GM12878 (cell line): ENCODE measurements at regions of chr7 and their contacts with region 1.

Region 1: GRCh38 chr7:137731436-137731835 is 115.3 kb downstream of the DGKI start:
- DNase-seq: no peak
- ATAC-seq: no peak
- H3K4me3 ChIP-seq: no peak overlapping the region
- H3K27ac ChIP-seq: no peak overlapping the region
- H3K4me1 ChIP-seq: no peaks in the 10 kb centered on the region
- H3K27me3 ChIP-seq: no peaks in the 10 kb centered on the region
- CTCF ChIP-seq: no peak
- EP300 ChIP-seq: no peak
- POLR2A ChIP-seq: no peak
- RAD21 ChIP-seq: no peak

Region 2: DNA sequence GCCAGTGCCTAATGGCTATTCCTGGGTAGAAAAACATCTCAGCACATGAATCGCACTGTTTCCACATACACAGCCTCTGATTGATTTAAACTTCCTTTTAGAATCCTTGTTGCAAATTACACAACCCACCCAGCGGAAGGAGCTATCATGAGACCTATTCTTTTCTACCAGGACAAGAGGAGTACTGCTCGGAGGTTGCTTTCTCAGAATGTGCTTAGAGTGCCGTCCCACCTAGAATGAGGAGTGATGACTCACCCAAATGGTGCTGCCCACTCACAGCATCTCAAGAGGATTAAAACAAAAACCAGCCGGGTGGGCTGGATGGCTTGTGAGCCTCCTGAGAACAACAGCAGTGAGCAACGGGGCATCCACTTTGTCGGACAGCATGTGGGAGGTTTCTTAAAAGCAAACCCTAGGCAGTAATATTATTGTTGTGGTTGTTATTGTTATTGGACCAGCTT is 13.6 kb before region 1 on chr7:
- CTCF ChIA-PET with region 1: interaction called, 6 read pairs
- POLR2A ChIA-PET with region 1: interaction called, 8 read pairs
- RAD21 ChIA-PET with region 1: interaction called, 3 read pairs
- SMC1A ChIA-PET with region 1: interaction called, 69 read pairs
- in situ Hi-C with region 1: no loop called
- intact Hi-C with region 1: no loop called
- DNase-seq: peak; percentile 3
- ATAC-seq: peak; percentile 80
- H3K4me3 ChIP-seq: no peak overlapping the region
- H3K27ac ChIP-seq: no peak overlapping the region
- H3K4me1 ChIP-seq: no peaks in the 10 kb centered on the region
- H3K27me3 ChIP-seq: no peaks in the 10 kb centered on the region
- CTCF ChIP-seq: no peak
- EP300 ChIP-seq: no peak
- POLR2A ChIP-seq: no peak
- RAD21 ChIP-seq: no peak

Region 3: GRCh38 chr7:137742051-137742450 is 10.6 kb after region 1 on chr7:
- CTCF ChIA-PET with region 1: interaction called, 8 read pairs
- POLR2A ChIA-PET with region 1: interaction called, 9 read pairs
- RAD21 ChIA-PET with region 1: interaction called, 4 read pairs
- SMC1A ChIA-PET with region 1: interaction called, 30 read pairs
- in situ Hi-C with region 1: no loop called
- intact Hi-C with region 1: no loop called
- DNase-seq: no peak
- ATAC-seq: no peak
- H3K4me3 ChIP-seq: no peak overlapping the region
- H3K27ac ChIP-seq: no peak overlapping the region
- H3K4me1 ChIP-seq: no peaks in the 10 kb centered on the region
- H3K27me3 ChIP-seq: no peaks in the 10 kb centered on the region
- CTCF ChIP-seq: no peak
- EP300 ChIP-seq: no peak
- POLR2A ChIP-seq: no peak
- RAD21 ChIP-seq: no peak

Region 4: GRCh38 chr7:137747359-137748031 is 16.1 kb after region 1 on chr7:
- CTCF ChIA-PET with region 1: interaction called, 6 read pairs
- POLR2A ChIA-PET with region 1: no interaction called
- RAD21 ChIA-PET with region 1: no interaction called
- SMC1A ChIA-PET with region 1: interaction called, 30 read pairs
- in situ Hi-C with region 1: no loop called
- intact Hi-C with region 1: no loop called
- DNase-seq: no peak
- ATAC-seq: no peak
- H3K4me3 ChIP-seq: no peak overlapping the region
- H3K27ac ChIP-seq: no peak overlapping the region
- H3K4me1 ChIP-seq: no peaks in the 10 kb centered on the region
- H3K27me3 ChIP-seq: no peaks in the 10 kb centered on the region
- CTCF ChIP-seq: no peak
- EP300 ChIP-seq: no peak
- POLR2A ChIP-seq: no peak
- RAD21 ChIP-seq: no peak

Region 5: DNA sequence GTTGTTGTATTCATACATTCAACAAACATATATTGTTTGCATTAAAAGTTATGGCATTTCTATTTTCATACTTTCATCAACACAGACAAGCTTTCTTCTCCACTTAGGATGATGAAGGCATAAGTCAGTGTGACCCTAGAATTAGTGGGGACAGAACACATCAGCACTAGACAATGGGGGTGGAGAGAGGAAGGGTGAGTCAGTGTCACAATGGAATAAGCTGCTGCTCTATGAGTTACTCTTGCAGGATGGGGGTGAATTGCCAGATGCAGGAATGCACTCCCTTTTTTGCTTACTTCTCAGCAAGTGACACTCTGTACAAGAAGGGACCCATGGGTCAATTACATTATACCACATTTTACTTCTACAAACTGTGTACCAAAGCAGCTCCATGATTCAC is 41.3 kb after region 1 on chr7:
- CTCF ChIA-PET with region 1: no interaction called
- POLR2A ChIA-PET with region 1: interaction called, 3 read pairs
- RAD21 ChIA-PET with region 1: interaction called, 3 read pairs
- SMC1A ChIA-PET with region 1: interaction called, 15 read pairs
- in situ Hi-C with region 1: no loop called
- intact Hi-C with region 1: no loop called
- DNase-seq: no peak
- ATAC-seq: peak; percentile 64
- H3K4me3 ChIP-seq: no peak overlapping the region
- H3K27ac ChIP-seq: no peak overlapping the region
- H3K4me1 ChIP-seq: no peaks in the 10 kb centered on the region
- H3K27me3 ChIP-seq: no peaks in the 10 kb centered on the region
- CTCF ChIP-seq: no peak
- EP300 ChIP-seq: no peak
- POLR2A ChIP-seq: no peak
- RAD21 ChIP-seq: no peak

Region 6: DNA sequence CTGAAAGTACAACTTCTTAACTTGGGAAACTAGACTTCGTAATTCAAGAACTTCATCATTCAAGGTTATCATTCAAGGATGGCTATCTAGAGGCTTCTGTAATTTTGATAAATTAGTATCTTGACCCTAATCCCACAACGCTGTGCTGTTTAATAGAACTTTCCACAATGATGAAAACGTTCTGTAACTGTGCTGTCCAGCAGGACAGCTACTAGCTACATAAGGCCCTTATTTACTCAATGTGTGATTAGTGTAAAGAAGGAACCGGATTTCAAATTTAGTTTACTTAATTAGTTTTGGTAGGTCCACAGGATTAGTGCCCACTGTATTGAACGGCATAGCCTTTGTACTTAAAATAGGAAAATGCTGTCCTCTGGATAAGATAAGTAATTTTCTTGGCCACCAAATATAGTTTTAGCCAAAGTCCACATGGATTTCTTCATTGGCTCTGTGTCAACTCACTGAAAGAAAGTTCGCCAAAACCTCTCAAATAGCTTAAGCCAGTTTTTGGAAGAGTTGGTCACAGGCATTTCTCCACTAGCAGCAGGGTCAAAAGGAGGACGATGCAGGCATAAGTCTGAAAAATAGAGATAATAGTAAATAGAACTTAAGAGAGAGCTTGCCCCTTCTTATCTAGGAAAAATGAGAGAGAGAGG is 98.0 kb after region 1 on chr7:
- CTCF ChIA-PET with region 1: no interaction called
- POLR2A ChIA-PET with region 1: no interaction called
- RAD21 ChIA-PET with region 1: no interaction called
- SMC1A ChIA-PET with region 1: no interaction called
- in situ Hi-C with region 1: no loop called
- intact Hi-C with region 1: no loop called
- DNase-seq: no peak
- ATAC-seq: no peak
- H3K4me3 ChIP-seq: no peak overlapping the region
- H3K27ac ChIP-seq: no peak overlapping the region
- H3K4me1 ChIP-seq: no peaks in the 10 kb centered on the region
- H3K27me3 ChIP-seq: no peaks in the 10 kb centered on the region
- CTCF ChIP-seq: no peak
- EP300 ChIP-seq: no peak
- POLR2A ChIP-seq: no peak
- RAD21 ChIP-seq: no peak